IMR-90 (cell line): ENCODE measurements at regions of chr14 and their contacts with region 1.

Region 1: GRCh38 chr14:55926012-55926411 is 192.2 kb upstream of the PELI2 start:
- DNase-seq: no peak
- ATAC-seq: no peak
- H3K4me3 ChIP-seq: no peak overlapping the region
- H3K27ac ChIP-seq: no peak overlapping the region
- H3K4me1 ChIP-seq: no peaks in the 10 kb centered on the region
- H3K27me3 ChIP-seq: peaks cover 35% of the 10 kb centered on the region
- CTCF ChIP-seq: no peak
- POLR2A ChIP-seq: no peak
- RAD21 ChIP-seq: no peak

Region 2: DNA sequence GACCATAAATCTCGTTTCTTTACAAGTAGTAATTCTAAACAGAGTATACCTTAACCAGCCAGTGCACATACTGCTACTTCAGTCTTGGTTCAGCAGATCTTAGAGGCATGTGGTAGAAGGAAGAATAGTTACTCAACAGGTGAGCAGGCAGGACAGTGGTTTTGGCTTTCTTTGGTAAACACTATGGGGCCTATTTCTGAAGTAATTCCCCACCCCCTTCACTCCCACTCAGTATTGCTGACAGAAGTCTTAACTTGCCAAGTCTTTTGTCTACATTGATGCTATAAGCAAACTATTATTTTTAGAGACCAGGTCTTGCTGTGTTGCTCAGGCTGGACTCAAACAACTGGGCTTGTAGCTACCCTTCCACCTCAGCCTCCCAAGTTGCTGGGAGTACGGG is 586.2 kb before region 1 on chr14:
- CTCF ChIA-PET with region 1: no interaction called
- POLR2A ChIA-PET with region 1: no interaction called
- dilution Hi-C with region 1: no loop called
- in situ Hi-C with region 1: no loop called
- intact Hi-C with region 1: no loop called
- DNase-seq: peak; percentile 25
- ATAC-seq: no peak
- H3K4me3 ChIP-seq: no peak overlapping the region
- H3K27ac ChIP-seq: no peak overlapping the region
- H3K4me1 ChIP-seq: peaks cover 8% of the 10 kb centered on the region
- H3K27me3 ChIP-seq: no peaks in the 10 kb centered on the region
- CTCF ChIP-seq: no peak
- POLR2A ChIP-seq: no peak
- RAD21 ChIP-seq: no peak

Region 3: DNA sequence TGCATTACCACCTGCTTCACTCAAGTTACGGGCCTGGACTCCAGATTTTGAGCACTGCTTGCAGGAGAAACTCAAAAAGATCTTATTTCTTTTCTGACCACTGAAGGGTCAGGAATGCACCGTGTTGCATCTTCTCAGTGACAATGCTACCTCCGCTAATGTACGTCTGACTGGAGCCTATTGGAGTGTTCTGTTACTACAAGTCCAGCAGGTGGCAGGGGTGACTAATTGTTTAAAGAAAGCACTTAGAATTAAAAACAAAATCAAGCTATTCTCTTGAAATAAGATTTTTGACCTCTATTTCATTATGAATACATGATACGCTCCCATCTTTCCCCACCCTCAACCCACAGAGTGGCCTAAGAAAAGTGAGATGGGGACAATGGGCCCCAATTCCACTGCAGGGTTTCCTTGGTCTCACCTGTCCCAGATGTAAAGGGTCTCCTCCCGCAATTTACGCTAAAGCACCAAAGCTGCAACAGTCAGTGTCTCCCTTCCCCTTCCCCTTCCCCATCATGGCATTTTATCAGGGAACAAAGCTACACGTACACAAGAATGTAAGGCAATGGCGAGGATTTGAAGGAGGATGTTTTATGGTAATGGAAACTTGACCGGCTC is 487.8 kb before region 1 on chr14:
- CTCF ChIA-PET with region 1: no interaction called
- POLR2A ChIA-PET with region 1: no interaction called
- dilution Hi-C with region 1: no loop called
- in situ Hi-C with region 1: no loop called
- intact Hi-C with region 1: loop called (anchors 5 kb)
- DNase-seq: peak; percentile 73
- ATAC-seq: peak; percentile 85
- H3K4me3 ChIP-seq: no peak overlapping the region
- H3K27ac ChIP-seq: no peak overlapping the region
- H3K4me1 ChIP-seq: no peaks in the 10 kb centered on the region
- H3K27me3 ChIP-seq: peaks cover 12% of the 10 kb centered on the region
- CTCF ChIP-seq: peak; percentile 64
- POLR2A ChIP-seq: no peak
- RAD21 ChIP-seq: peak; percentile 65